T-cell (primary cell): ENCODE measurements at regions of chr19 and their contacts with region 1.

Region 1: DNA sequence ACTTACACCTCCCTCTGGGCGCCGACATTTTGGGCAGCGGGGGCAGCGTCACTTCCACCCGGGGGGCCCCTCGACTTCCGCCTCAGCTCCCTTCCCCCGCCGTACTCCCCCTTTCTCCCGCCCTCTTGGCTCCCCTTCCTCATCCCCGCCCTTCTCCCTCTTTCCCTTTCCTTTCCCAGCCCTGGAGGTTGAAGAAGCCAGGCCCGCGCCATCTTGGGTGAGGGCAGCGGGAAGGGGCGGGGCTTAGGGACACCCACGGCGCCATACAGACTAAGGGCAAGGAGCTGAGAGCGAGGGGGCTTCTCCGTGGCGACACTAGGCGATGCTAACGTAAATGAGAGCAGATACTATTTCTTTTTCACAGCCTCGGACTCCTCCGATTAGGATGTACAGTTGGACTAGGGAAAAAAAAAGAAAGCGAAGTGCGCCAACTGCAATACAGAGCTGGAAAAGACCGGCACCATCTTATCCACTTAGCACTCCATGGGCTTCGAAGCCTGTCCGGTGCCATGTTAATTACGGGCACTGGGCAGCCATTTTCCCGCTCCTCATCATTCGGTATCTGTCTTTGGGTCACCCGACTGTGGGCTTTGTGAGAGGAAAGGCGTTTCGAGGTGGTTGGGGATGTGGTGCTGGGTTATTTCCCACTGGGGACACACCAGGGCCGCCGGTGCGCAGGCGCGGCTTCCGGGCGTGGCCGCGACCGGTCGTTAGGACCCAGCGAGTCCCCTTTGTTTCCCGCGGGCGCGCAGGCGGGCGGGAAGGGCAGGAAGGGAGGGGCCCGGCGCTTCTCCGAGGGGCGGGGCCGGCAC is at the start of gene FIZ1:
- DNase-seq: peak; percentile 86 to 97 (median 92)
- ATAC-seq: peak; percentile 75 to 78 (median 76)
- H3K4me3 ChIP-seq: peak within 1 kb of the TSS; percentile 86 to 97
- H3K4me3 Mint-ChIP-seq: peak within 1 kb of the TSS; percentile 98 to 99 (median 98)
- H3K27ac ChIP-seq: peak within 1 kb of the TSS; percentile 97
- H3K27ac Mint-ChIP-seq: peak within 1 kb of the TSS; percentile 100
- H3K4me1 ChIP-seq: peaks cover 7 to 33% of the 10 kb centered on the region in 2 experiments
- H3K4me1 Mint-ChIP-seq: peaks cover 25 to 44% (median 27%) of the 10 kb centered on the region in 3 donors
- H3K27me3 ChIP-seq: no peaks in the 10 kb centered on the region
- H3K27me3 Mint-ChIP-seq: no peaks in the 10 kb centered on the region
- total RNA-seq, gene FIZ1: 9.8 to 27.7 (median 19.0) TPM

Region 2: GRCh38 chr19:55653758-55654539 is 54.3 kb after region 1 on chr19:
- CTCF ChIA-PET with region 1: interaction called in 1 of 2 experiments, 10 read pairs
- POLR2A ChIA-PET with region 1: interaction called in 1 of 2 experiments, 4 read pairs
- DNase-seq: peak; percentile 98 to 100 (median 99)
- ATAC-seq: peak; percentile 79 to 82 (median 81)
- H3K4me3 ChIP-seq: peak overlapping the region; percentile 57 to 89
- H3K4me3 Mint-ChIP-seq: peak overlapping the region; percentile 85 to 88 (median 87)
- H3K27ac ChIP-seq: peak overlapping the region; percentile 100
- H3K27ac Mint-ChIP-seq: peak overlapping the region; percentile 95 to 99
- H3K4me1 ChIP-seq: peaks cover 17 to 51% of the 10 kb centered on the region in 2 experiments
- H3K4me1 Mint-ChIP-seq: peaks cover 46 to 52% (median 47%) of the 10 kb centered on the region in 3 donors
- H3K27me3 ChIP-seq: peaks cover 0 to 7% of the 10 kb centered on the region in 2 experiments
- H3K27me3 Mint-ChIP-seq: no peaks in the 10 kb centered on the region